GM10248 (cell line): ENCODE measurements at regions of chr7 and their contacts with region 1.

Region 1: DNA sequence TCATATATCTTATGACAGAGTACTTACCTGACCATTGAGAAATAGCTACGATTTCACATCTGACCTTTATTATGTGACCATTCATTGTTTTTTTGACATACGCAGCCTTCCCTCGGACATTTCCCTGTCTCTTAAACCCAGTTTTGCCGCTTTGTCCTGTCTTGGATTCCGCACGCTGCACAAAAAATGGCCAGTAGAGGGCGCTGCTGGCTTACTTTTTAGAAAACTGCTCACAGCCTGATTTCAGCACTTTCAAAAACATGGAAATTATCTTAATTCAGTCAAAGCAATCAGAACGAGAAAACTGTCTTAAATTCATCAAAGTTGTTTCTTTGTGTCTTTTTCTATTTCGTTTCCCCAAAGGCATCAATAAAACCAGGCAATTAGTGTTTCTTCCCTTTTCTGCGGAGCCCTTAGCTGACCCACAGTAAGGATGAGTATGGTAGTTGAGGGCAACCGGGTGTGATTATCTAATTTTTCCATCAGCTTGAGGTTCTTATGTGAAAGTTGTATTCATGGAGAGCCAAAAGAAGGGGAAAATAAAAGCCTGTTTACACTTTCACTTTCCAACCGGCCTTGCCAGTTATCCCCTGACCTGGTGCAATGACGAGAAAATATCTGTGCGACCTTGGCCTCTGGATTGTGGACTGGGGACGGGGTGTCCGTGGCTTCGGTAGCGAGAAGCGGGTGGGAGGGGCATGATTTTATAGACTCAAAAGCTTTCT is 144.4 kb downstream of the DYNC1I1 start:
- DNase-seq: peak; percentile 48
- CTCF ChIP-seq: peak; percentile 93

Region 2: DNA sequence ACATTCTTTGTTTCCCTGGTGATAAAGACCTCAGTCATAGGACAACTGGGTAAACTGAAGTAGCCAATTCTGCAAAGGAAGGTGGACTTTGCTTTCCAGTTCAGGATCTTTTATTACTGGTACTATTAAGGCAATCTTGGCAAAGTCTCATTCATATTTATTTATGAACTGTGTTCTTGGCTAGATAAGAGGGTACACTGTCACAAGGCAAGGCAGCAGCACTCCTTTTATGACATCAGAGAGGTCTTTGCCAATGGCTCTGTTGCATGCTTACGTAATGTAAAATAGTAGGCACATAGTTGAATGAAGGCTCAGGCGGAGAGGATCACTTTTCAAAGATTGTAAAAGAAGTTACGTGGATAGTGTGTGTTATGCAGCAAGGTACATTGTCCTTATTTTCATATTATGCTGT is 256.7 kb before region 1 on chr7:
- CTCF ChIA-PET with region 1: no interaction called
- POLR2A ChIA-PET with region 1: no interaction called
- DNase-seq: no peak
- CTCF ChIP-seq: no peak

Region 3: DNA sequence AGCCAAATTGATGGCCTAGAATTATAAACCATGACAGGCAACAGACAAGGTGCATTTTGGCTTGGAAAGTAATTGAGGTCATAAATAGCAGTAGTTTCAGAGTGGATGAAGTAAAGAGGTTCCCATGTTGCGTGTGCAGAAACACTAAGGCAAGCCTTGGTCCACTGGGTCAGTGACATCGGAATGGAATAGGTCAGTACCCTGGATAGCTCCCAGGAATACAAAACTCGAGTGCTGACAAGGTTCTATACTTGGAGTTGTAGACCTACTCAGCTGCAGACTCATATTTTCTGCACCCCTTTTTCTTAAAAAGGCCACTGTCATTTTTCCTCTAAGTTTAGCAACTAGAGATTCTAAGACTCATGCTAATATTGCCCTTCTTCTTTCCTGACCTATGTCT is 11.6 kb before region 1 on chr7:
- CTCF ChIA-PET with region 1: interaction called, 32 read pairs
- POLR2A ChIA-PET with region 1: no interaction called
- DNase-seq: no peak
- CTCF ChIP-seq: no peak

Region 4: DNA sequence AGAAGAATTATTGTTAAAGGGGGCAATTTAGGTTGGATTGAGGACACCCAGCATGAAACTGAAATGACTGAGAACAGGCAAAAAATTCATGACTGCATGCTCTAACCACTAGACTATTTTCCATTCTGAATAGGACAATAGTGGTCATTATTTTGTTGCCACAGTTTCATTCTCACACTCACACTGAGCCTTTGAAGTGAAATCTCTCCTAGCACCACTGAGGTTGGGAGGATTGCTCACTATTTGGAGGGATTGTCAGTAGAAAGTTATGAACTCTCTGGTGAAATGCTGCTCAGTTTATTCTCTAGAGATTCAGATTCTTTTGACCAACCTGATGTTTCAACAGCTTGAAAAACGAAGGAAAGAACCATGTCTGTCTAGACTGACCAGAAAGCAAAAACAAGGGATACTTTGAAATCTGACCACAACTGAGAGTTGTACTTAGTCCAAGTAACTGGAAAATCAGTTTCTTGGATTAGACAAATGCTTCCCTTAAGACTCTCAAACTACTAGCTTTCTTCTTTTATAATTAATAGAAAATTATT is 46.8 kb after region 1 on chr7:
- CTCF ChIA-PET with region 1: interaction called, 10 read pairs
- POLR2A ChIA-PET with region 1: no interaction called
- DNase-seq: no peak
- CTCF ChIP-seq: no peak

Region 5: DNA sequence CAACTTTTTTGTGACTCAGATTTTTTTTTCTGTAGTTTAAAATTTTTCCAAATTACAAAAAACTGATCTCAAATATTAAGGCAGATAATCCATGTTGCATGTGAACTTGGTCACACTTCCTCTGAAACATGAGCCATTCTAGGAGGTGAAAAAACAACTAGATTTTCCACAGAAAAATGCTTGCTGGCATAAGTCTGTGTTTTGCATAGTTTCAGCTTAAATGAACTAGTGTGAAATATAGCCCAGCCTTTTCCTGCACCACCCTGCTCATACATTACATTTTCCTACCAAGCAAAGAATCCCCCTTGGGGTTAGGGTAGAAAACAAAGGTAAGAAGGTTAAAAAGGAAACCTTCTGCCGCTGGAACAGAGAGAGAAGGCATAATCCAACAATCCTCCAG is 357.0 kb after region 1 on chr7:
- CTCF ChIA-PET with region 1: no interaction called
- POLR2A ChIA-PET with region 1: no interaction called
- DNase-seq: no peak
- CTCF ChIP-seq: no peak

Region 6: DNA sequence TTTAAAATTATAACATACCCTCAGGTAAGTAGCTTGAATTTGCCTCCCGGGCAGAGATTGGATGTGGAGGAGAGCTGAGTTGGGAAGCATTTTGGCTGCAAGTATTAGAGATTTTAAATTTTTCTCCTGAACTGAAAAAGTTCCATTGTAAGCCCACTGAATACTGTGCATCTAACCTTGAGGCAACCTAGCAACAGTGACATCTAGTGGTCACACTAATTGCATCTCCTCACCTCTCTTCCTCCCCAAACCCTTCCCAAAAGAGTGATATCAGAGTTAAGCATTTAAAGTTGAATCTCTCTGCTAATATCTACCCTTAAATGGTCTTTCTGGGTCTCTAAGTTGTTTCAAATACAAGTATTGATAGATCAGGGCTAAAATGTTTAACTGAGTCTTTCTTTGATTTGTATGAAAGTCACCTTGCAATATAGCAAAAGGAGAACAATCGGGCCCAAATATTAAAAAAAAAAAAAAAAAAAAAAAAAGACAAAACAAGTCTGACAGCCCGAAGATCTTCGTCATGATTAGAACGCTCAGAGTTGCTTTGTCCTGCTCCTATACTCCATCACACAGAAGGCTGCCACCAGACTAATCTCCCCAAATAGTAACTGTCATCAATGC is 1148.3 kb after region 1 on chr7:
- CTCF ChIA-PET with region 1: interaction called, 11 read pairs
- POLR2A ChIA-PET with region 1: no interaction called
- DNase-seq: peak; percentile 58
- CTCF ChIP-seq: peak; percentile 69